CD4-positive, alpha-beta T cell (primary cell): ENCODE measurements at regions of chr17 and their contacts with region 1.

Region 1: DNA sequence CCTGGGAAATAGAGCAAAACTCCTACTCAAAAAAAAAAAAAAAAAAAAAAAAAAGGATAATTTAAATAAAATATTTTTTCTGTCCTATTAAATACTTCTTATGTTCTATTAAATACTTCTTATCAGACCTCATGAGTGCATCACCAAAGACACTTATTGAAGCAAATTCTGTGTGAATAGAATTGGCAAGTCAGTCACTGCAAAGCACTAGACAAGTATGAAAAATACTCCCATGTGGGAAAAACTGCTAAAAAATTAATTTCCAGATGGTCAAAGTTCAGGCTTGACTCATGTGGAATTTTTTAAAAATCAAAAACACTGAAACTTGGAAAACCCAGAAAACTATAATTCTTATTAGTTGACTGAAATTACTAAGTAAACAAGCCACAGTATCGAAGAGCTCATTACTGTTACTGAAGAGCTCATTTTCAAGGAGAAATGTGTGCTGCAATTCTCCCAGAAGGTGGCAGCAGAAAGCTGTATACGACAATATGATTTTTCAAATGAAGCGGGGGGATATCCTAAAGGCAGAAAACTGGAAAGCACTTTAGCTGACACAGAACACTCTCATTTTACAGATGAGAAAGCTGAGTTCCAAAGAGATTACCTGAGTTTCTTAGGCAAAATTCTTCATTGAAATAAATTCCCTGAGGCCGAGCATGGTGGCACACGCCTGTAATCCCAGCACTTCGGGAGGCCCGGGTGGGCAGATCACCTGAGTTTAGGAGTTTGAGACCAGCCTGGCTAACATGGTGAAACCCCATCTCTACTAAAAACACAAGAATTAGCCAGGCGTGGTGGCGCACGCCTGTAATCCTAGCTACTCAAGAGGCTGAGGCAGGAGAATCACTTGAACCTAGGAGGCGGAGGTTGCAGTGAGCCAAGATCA is 15.9 kb upstream of the FBXO47 start:
- DNase-seq: peak in 12 of 14 experiments; percentile 12 to 81 (median 38)
- ATAC-seq: peak; percentile 83
- H3K4me3 ChIP-seq: no peak overlapping the region
- H3K4me3 Mint-ChIP-seq: no peak overlapping the region
- H3K27ac ChIP-seq: no peak overlapping the region
- H3K27ac Mint-ChIP-seq: no peak overlapping the region
- H3K4me1 ChIP-seq: peaks cover 2% of the 10 kb centered on the region
- H3K4me1 Mint-ChIP-seq: peaks cover 6% of the 10 kb centered on the region
- H3K27me3 ChIP-seq: no peaks in the 10 kb centered on the region
- H3K27me3 Mint-ChIP-seq: no peaks in the 10 kb centered on the region
- CTCF ChIP-seq: peak; percentile 90

Region 2: DNA sequence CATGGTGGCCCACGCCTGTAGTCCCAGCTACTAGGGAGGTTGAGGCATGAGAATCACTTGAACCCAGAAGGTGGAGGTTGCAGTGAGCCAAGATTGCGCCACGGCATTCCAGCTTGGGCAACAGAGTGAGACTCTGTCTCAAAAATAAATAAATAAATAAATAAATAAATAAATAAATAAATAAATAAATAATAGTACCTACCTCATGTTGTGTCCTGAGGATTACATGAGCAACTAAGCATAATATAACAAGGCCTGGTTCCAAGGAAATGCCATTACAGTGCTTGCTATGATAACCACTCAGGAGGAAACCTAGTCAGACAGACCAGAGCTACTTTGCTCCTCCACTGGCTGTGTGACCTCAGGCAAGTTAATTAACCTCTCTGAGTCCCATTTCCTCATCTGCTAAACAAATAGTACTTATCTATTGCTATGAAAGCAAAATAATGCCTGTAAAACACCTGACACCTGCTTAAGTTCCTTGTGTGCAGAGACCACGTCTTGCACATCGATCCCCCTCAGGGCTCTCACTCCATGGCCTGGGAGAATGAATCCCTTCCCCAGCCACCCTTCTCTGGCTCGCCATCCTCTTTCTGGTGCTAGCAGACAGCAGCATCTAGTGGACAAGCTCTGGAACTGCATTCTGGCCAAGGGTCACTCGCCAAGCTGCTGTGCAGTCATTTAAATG is 315.9 kb before region 1 on chr17:
- CTCF ChIA-PET with region 1: no interaction called
- POLR2A ChIA-PET with region 1: no interaction called
- intact Hi-C with region 1: no loop called
- DNase-seq: peak; percentile 18 to 74 (median 33)
- ATAC-seq: peak; percentile 60
- H3K4me3 ChIP-seq: no peak overlapping the region
- H3K4me3 Mint-ChIP-seq: no peak overlapping the region
- H3K27ac ChIP-seq: no peak overlapping the region
- H3K27ac Mint-ChIP-seq: no peak overlapping the region
- H3K4me1 ChIP-seq: no peaks in the 10 kb centered on the region
- H3K4me1 Mint-ChIP-seq: peaks cover 5% of the 10 kb centered on the region
- H3K27me3 ChIP-seq: peaks cover 36 to 42% of the 10 kb centered on the region in 2 experiments
- H3K27me3 Mint-ChIP-seq: peaks cover 73% of the 10 kb centered on the region
- CTCF ChIP-seq: peak; percentile 98

Region 3: DNA sequence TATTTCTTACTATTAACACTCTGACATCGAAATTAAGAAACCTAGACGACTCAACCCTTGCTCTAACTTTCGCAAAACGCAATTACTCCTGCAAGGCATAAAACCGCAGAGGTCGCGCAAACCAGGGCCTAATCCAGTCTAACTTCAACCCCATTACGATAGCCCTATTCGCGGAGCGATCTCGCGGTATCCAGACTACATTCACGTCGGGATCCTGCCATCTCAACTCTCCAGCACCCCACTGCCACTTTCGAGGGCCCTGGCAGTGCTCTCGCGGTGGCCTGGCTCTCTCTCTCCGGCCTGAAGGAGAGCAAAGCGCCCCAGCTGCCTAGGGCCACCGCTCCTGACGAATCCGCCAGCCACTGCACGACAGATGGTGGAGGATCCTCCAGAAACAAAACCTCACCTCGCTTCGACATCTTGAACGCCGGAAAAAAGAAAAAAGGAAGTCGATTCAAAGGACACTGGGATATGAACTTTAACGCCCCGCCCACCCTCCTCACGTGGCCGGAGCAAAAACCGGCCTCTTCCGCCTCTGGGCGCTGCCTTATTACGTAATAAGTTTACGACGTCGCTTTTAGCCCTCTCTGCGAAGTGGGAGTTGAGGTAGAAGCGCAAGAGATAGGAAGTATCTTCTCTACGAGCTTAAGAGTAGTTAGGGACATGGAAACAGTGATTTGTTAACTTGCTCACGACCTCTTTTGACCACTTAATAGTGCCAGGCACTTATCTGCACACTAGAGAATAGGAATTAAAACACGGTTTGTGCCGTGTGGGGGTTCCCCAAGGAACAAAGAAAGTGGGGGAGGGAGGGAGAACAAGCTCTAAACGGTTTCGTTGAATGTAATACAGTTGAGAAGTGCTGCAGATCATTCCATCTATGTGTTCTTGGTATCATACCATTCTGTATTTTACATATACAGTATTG is 129.5 kb before region 1 on chr17 and contains the start of gene RPL23:
- CTCF ChIA-PET with region 1: interaction called, 5 read pairs
- POLR2A ChIA-PET with region 1: interaction called, 12 read pairs
- intact Hi-C with region 1: no loop called
- DNase-seq: peak; percentile 77 to 97 (median 86)
- ATAC-seq: peak; percentile 80
- H3K4me3 ChIP-seq: peak within 1 kb of the TSS; percentile 67
- H3K4me3 Mint-ChIP-seq: peak within 1 kb of the TSS; percentile 90
- H3K27ac ChIP-seq: peak within 1 kb of the TSS; percentile 86 to 92
- H3K27ac Mint-ChIP-seq: peak within 1 kb of the TSS; percentile 96
- H3K4me1 ChIP-seq: peaks cover 29% of the 10 kb centered on the region
- H3K4me1 Mint-ChIP-seq: peaks cover 39% of the 10 kb centered on the region
- H3K27me3 ChIP-seq: no peaks in the 10 kb centered on the region
- H3K27me3 Mint-ChIP-seq: no peaks in the 10 kb centered on the region
- CTCF ChIP-seq: no peak
- total RNA-seq, gene RPL23: 2,293 to 2,296 TPM

Region 4: GRCh38 chr17:39069114-39069756 is 86.1 kb after region 1 on chr17:
- CTCF ChIA-PET with region 1: no interaction called
- POLR2A ChIA-PET with region 1: no interaction called
- intact Hi-C with region 1: loop called (anchors 1 kb)
- DNase-seq: peak in 4 of 14 experiments; percentile 45 to 70 (median 66)
- ATAC-seq: peak; percentile 97
- H3K4me3 ChIP-seq: no peak overlapping the region
- H3K4me3 Mint-ChIP-seq: no peak overlapping the region
- H3K27ac ChIP-seq: no peak overlapping the region
- H3K27ac Mint-ChIP-seq: no peak overlapping the region
- H3K4me1 ChIP-seq: peaks cover 7% of the 10 kb centered on the region
- H3K4me1 Mint-ChIP-seq: peaks cover 6% of the 10 kb centered on the region
- H3K27me3 ChIP-seq: no peaks in the 10 kb centered on the region
- H3K27me3 Mint-ChIP-seq: no peaks in the 10 kb centered on the region
- CTCF ChIP-seq: peak; percentile 72

Region 5: DNA sequence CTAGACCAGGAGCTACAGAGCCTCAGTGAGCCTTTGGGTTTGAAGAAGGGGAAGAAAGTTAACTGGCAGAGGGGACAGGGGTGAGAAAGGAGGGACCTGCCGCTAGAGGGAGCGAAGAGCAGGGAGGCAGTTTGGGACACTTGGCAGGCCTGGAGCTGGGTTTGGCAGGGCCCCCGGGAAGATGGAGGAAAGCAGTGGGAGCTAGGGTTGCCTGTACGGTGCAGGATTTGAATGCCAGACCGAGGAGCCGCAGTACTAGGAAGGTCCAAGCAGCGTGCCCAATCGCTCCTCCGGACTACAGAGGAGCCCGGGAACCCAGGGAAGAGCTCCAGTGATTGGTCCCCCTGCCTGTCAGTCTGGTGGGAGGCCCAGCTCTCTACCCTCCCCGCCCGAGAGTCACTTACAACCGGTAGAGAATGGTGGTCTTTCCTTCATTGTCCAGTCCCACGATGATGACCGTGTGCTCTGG is 181.6 kb after region 1 on chr17:
- CTCF ChIA-PET with region 1: interaction called, 17 read pairs
- POLR2A ChIA-PET with region 1: interaction called, 4 read pairs
- intact Hi-C with region 1: no loop called
- DNase-seq: peak; percentile 56 to 85 (median 63)
- ATAC-seq: peak; percentile 86
- H3K4me3 ChIP-seq: peak overlapping the region; percentile 60
- H3K4me3 Mint-ChIP-seq: peak overlapping the region; percentile 90
- H3K27ac ChIP-seq: no peak overlapping the region
- H3K27ac Mint-ChIP-seq: no peak overlapping the region
- H3K4me1 ChIP-seq: peaks cover 32% of the 10 kb centered on the region
- H3K4me1 Mint-ChIP-seq: peaks cover 27% of the 10 kb centered on the region
- H3K27me3 ChIP-seq: peaks cover 17 to 22% of the 10 kb centered on the region in 2 experiments
- H3K27me3 Mint-ChIP-seq: peaks cover 34% of the 10 kb centered on the region
- CTCF ChIP-seq: peak; percentile 94

Region 6: DNA sequence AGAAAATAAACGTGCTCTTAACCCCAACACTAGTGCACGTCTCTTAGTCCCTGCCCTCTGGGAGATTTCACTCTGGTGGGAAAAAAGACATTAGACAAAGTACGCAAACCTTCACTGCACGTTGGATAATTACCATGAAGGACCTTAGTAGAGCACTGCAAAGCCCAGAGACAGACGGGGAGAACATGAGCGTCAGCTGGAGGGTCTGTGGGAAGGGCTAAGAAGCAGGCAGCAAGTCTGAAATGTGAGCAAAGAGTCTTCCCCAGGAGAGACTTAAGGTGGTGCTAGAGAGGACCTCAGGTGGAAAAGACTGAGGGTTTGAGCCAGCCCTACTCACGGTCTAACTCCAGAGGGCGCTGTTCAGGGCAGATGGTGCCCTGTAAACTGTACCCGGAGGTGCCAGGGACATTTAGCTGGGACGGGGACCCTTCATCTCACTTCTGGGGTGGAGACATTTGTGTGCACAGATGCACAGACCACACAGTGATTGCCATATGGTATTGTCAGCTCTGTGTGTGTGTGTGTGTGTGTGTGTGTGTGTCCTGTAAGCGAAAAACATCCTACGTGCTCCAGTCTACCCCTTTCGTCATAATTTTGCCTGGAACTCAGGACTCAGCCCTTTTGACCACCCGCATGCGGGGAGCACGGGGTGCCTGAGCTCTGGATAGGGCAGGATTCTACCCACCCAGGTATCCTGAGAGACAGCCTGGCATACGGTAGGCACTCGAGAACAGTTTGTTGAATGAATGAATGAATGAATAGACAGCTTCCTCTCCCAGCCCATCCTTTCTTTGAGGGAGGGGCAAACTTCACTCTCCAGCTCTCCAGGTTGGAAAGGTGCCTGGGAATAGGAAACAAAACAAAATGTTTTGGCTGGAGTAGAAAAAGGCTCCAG is 252.7 kb after region 1 on chr17:
- CTCF ChIA-PET with region 1: interaction called, 7 read pairs
- POLR2A ChIA-PET with region 1: interaction called, 3 read pairs
- intact Hi-C with region 1: loop called in 1 of 2 experiments (anchors 10 kb)
- DNase-seq: peak in 9 of 14 experiments; percentile 23 to 80 (median 47)
- ATAC-seq: peak; percentile 45
- H3K4me3 ChIP-seq: no peak overlapping the region
- H3K4me3 Mint-ChIP-seq: no peak overlapping the region
- H3K27ac ChIP-seq: no peak overlapping the region
- H3K27ac Mint-ChIP-seq: peak overlapping the region; percentile 31
- H3K4me1 ChIP-seq: peaks cover 56% of the 10 kb centered on the region
- H3K4me1 Mint-ChIP-seq: peaks cover 44% of the 10 kb centered on the region
- H3K27me3 ChIP-seq: peaks cover 0 to 4% of the 10 kb centered on the region in 2 experiments
- H3K27me3 Mint-ChIP-seq: peaks cover 14% of the 10 kb centered on the region
- CTCF ChIP-seq: peak; percentile 63